ENCODE measurements at regions of chr2 and their contacts with region 1.

Region 1: GRCh38 chr2:88874063-88874657 is 182.7 kb downstream of the RPIA start:
- DNase-seq: peak in 7 of 9 donors; percentile 21 to 64 (median 54)
- ATAC-seq: peak; percentile 76
- H3K4me3 ChIP-seq: no peak overlapping the region
- H3K4me3 Mint-ChIP-seq: no peak overlapping the region
- H3K27ac ChIP-seq: no peak overlapping the region
- H3K27ac Mint-ChIP-seq: no peak overlapping the region
- H3K4me1 ChIP-seq: no peaks in the 10 kb centered on the region
- H3K4me1 Mint-ChIP-seq: peaks cover 0 to 6% (median 0%) of the 10 kb centered on the region in 7 donors
- H3K27me3 ChIP-seq: no peaks in the 10 kb centered on the region
- H3K27me3 Mint-ChIP-seq: peaks cover 6 to 29% (median 26%) of the 10 kb centered on the region in 5 donors

Region 2: GRCh38 chr2:88919087-88919738 is 45.1 kb after region 1 on chr2:
- CTCF ChIA-PET with region 1: no interaction called
- POLR2A ChIA-PET with region 1: no interaction called
- intact Hi-C with region 1: loop called in 1 of 2 experiments (anchors 1 kb)
- DNase-seq: peak in 4 of 9 donors; percentile 20 to 32 (median 22)
- ATAC-seq: peak; percentile 24
- H3K4me3 ChIP-seq: no peak overlapping the region
- H3K4me3 Mint-ChIP-seq: peak overlapping the region in 3 of 10 donors; percentile 0 to 13 (median 6)
- H3K27ac ChIP-seq: no peak overlapping the region
- H3K27ac Mint-ChIP-seq: peak overlapping the region in 1 of 9 donors; percentile 38
- H3K4me1 ChIP-seq: no peaks in the 10 kb centered on the region
- H3K4me1 Mint-ChIP-seq: peaks cover 0 to 5% (median 0%) of the 10 kb centered on the region in 7 donors
- H3K27me3 ChIP-seq: no peaks in the 10 kb centered on the region
- H3K27me3 Mint-ChIP-seq: peaks cover 7 to 26% (median 11%) of the 10 kb centered on the region in 5 donors

Region 3: GRCh38 chr2:88933980-88934379 is 59.8 kb after region 1 on chr2:
- CTCF ChIA-PET with region 1: no interaction called
- POLR2A ChIA-PET with region 1: no interaction called
- intact Hi-C with region 1: loop called in 1 of 2 experiments (anchors 5 kb)
- DNase-seq: peak in 7 of 9 donors; percentile 12 to 39 (median 29)
- ATAC-seq: peak; percentile 45
- H3K4me3 ChIP-seq: no peak overlapping the region
- H3K4me3 Mint-ChIP-seq: no peak overlapping the region
- H3K27ac ChIP-seq: no peak overlapping the region
- H3K27ac Mint-ChIP-seq: peak overlapping the region in 1 of 9 donors; percentile 13
- H3K4me1 ChIP-seq: no peaks in the 10 kb centered on the region
- H3K4me1 Mint-ChIP-seq: peaks cover 0 to 8% (median 4%) of the 10 kb centered on the region in 7 donors
- H3K27me3 ChIP-seq: no peaks in the 10 kb centered on the region
- H3K27me3 Mint-ChIP-seq: peaks cover 0 to 9% (median 0%) of the 10 kb centered on the region in 5 donors

Region 4: DNA sequence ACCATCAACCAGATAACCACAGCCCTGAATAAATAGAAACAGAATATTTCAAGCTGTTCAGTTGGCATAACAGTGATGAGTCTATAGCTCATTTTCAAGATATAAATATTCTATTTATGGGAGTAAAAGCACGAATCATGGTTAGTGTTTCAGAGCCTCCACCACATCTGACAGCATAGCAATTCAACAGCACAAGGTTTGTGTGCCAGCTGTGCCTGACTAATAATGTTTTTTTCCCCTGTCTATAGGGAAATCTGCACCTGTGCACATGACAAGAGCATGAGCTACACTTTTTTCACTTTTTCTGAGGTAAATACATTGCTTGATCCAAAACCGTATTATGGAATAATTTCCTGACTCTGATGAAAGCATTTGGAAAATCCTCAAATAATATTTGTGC is 68.6 kb after region 1 on chr2:
- CTCF ChIA-PET with region 1: no interaction called
- POLR2A ChIA-PET with region 1: no interaction called
- intact Hi-C with region 1: loop called in 1 of 2 experiments (anchors 2 kb)
- DNase-seq: no peak
- ATAC-seq: no peak
- H3K4me3 ChIP-seq: no peak overlapping the region
- H3K4me3 Mint-ChIP-seq: no peak overlapping the region
- H3K27ac ChIP-seq: no peak overlapping the region
- H3K27ac Mint-ChIP-seq: no peak overlapping the region
- H3K4me1 ChIP-seq: no peaks in the 10 kb centered on the region
- H3K4me1 Mint-ChIP-seq: no peaks in the 10 kb centered on the region
- H3K27me3 ChIP-seq: no peaks in the 10 kb centered on the region
- H3K27me3 Mint-ChIP-seq: peaks cover 2 to 16% (median 10%) of the 10 kb centered on the region in 5 donors

Region 5: DNA sequence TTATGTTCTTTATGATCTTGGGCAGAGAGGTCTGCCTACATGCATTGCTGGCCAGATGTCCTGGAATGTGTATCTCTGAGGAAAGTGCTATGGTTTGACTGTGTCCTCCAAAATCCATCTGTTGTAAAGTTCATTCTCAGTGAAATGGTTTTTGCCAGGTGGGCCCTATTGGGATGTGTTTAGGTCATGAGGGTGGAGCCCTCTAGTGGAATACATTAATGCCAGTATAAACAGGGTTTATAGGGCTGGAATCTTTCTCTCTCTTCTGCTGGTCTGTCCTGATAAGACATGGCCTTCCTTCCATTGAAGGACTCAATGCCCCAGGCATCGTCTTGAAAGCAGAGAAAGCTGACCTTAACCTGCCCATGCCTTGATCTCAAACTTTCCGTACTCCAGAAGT is 75.8 kb after region 1 on chr2:
- CTCF ChIA-PET with region 1: no interaction called
- POLR2A ChIA-PET with region 1: no interaction called
- intact Hi-C with region 1: loop called in 1 of 2 experiments (anchors 2 kb)
- DNase-seq: peak in 2 of 9 donors; percentile 11 to 14
- ATAC-seq: no peak
- H3K4me3 ChIP-seq: no peak overlapping the region
- H3K4me3 Mint-ChIP-seq: no peak overlapping the region
- H3K27ac ChIP-seq: no peak overlapping the region
- H3K27ac Mint-ChIP-seq: no peak overlapping the region
- H3K4me1 ChIP-seq: no peaks in the 10 kb centered on the region
- H3K4me1 Mint-ChIP-seq: no peaks in the 10 kb centered on the region
- H3K27me3 ChIP-seq: no peaks in the 10 kb centered on the region
- H3K27me3 Mint-ChIP-seq: peaks cover 11 to 38% (median 23%) of the 10 kb centered on the region in 5 donors

Measured in naive thymus-derived CD4-positive, alpha-beta T cell (primary cell).